Activated CD4-positive, alpha-beta memory T cell treated with anti-CD3 and anti-CD28 coated beads for 36 hours (primary cell): ENCODE measurements at regions of chr10 and their contacts with region 1.

Region 1: GRCh38 chr10:61750929-61751471 is 88.3 kb downstream of the CABCOCO1 start:
- DNase-seq: peak; percentile 84
- H3K4me3 Mint-ChIP-seq: no peak overlapping the region
- H3K27ac Mint-ChIP-seq: peak overlapping the region; percentile 44
- H3K4me1 Mint-ChIP-seq: peaks cover 24% of the 10 kb centered on the region
- H3K27me3 Mint-ChIP-seq: no peaks in the 10 kb centered on the region

Region 2: GRCh38 chr10:61760943-61761824 is 10.2 kb after region 1 on chr10:
- CTCF ChIA-PET with region 1: interaction called, 18 read pairs
- POLR2A ChIA-PET with region 1: no interaction called
- intact Hi-C with region 1: no loop called
- DNase-seq: no peak
- H3K4me3 Mint-ChIP-seq: no peak overlapping the region
- H3K27ac Mint-ChIP-seq: no peak overlapping the region
- H3K4me1 Mint-ChIP-seq: peaks cover 16% of the 10 kb centered on the region
- H3K27me3 Mint-ChIP-seq: no peaks in the 10 kb centered on the region

Region 3: DNA sequence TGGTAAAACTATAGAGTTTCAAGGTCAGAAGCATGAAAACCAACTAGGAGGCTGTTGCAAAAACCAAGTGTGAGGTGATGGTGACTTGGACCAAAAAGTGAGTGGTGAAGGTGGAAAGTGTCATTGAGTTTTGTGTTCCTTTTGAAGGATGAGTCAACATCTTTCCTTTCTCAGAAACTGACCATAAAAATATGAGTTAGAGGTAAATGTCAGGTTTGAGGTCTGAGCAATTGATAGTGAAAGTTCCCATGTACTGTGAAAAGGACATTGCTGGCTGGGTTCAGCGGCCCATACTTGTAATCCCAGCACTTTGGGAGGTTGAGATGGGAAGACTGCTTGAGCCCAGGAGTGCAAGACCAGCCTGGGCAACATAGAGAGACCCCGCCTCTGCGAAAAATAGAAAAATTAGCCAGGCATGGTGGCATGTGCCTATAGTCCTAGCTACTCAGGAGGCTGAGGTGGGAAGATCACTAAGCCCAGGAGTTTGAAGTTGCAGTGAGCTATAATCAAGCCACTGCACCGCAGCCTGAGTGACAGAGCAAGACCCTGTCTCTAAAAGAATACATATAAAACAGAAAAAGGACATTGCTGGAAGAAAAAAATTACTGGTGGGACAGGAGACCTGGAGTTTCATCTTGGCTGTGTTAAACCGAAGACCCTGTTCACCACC is 61.2 kb after region 1 on chr10:
- CTCF ChIA-PET with region 1: interaction called, 3 read pairs
- POLR2A ChIA-PET with region 1: no interaction called
- intact Hi-C with region 1: loop called (anchors 5 kb)
- DNase-seq: no peak
- H3K4me3 Mint-ChIP-seq: no peak overlapping the region
- H3K27ac Mint-ChIP-seq: no peak overlapping the region
- H3K4me1 Mint-ChIP-seq: peaks cover 2% of the 10 kb centered on the region
- H3K27me3 Mint-ChIP-seq: peaks cover 1% of the 10 kb centered on the region

Region 4: DNA sequence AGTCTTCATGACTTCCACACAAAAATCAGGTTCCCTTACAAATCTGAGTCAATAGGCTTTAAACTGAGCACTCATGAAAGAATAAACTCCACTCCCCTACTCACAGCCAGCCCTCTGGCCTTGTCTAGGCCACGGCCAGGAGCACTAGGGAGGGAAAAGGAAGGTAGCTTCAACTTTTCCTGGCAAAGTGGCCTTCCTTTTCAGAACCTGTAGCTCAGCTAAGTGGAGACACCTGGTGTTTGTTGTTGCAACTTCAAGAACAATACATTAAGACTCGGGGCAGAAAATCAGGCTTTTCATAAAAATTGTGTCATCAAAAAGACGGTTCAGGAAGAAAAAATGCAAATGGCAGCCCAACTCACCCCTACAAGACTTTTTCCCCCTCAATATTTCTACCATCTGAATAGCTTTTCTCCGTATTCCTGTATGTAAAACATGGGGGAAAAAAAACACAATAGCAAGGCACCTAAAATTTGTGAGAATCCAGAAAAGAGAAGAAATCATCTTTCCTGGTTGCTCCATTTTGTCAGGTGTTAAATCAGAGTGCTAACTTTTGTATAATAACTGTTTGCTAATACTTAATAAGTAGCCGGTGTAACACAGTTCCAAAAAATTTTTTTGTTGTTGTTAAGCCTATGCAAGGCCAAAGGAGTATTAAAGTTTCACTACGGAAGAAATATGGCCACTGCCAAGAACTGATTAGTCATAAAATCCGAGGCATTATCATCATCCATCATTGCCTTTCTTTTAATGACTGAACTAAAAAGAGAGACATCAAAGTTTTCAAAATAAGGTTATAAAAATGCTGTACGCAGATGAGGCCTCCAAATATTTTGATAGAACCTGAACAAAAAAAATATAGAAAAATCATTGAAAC is 84.3 kb after region 1 on chr10:
- CTCF ChIA-PET with region 1: interaction called, 46 read pairs
- POLR2A ChIA-PET with region 1: interaction called, 4 read pairs
- intact Hi-C with region 1: loop called (anchors 1 kb)
- DNase-seq: no peak
- H3K4me3 Mint-ChIP-seq: no peak overlapping the region
- H3K27ac Mint-ChIP-seq: no peak overlapping the region
- H3K4me1 Mint-ChIP-seq: peaks cover 23% of the 10 kb centered on the region
- H3K27me3 Mint-ChIP-seq: no peaks in the 10 kb centered on the region

Region 5: GRCh38 chr10:61882621-61883373 is 131.8 kb after region 1 on chr10:
- CTCF ChIA-PET with region 1: interaction called, 5 read pairs
- POLR2A ChIA-PET with region 1: no interaction called
- intact Hi-C with region 1: loop called (anchors 5 kb)
- DNase-seq: peak; percentile 84
- H3K4me3 Mint-ChIP-seq: peak overlapping the region; percentile 47
- H3K27ac Mint-ChIP-seq: peak overlapping the region; percentile 77
- H3K4me1 Mint-ChIP-seq: peaks cover 30% of the 10 kb centered on the region
- H3K27me3 Mint-ChIP-seq: no peaks in the 10 kb centered on the region

Region 6: GRCh38 chr10:61992671-61993668 is 242.0 kb after region 1 on chr10:
- CTCF ChIA-PET with region 1: interaction called, 10 read pairs
- POLR2A ChIA-PET with region 1: no interaction called
- intact Hi-C with region 1: no loop called
- DNase-seq: peak; percentile 75
- H3K4me3 Mint-ChIP-seq: peak overlapping the region; percentile 57
- H3K27ac Mint-ChIP-seq: peak overlapping the region; percentile 99
- H3K4me1 Mint-ChIP-seq: peaks cover 85% of the 10 kb centered on the region
- H3K27me3 Mint-ChIP-seq: no peaks in the 10 kb centered on the region